Activated CD4-positive, alpha-beta T cell treated with anti-CD3 and anti-CD28 coated beads, Interleukin-2, amount 10 ng/mL, durations not matched to agents 24 days and 14 days (primary cell): ENCODE measurements at regions of chr4 and their contacts with region 1.

Region 1: GRCh38 chr4:38455092-38455862 is 208.7 kb upstream of the KLF3 start:
- DNase-seq: peak; percentile 62
- H3K4me3 Mint-ChIP-seq: peak overlapping the region; percentile 21
- H3K27ac Mint-ChIP-seq: peak overlapping the region; percentile 67
- H3K4me1 Mint-ChIP-seq: peaks cover 32% of the 10 kb centered on the region
- H3K27me3 Mint-ChIP-seq: peaks cover 16% of the 10 kb centered on the region

Region 2: DNA sequence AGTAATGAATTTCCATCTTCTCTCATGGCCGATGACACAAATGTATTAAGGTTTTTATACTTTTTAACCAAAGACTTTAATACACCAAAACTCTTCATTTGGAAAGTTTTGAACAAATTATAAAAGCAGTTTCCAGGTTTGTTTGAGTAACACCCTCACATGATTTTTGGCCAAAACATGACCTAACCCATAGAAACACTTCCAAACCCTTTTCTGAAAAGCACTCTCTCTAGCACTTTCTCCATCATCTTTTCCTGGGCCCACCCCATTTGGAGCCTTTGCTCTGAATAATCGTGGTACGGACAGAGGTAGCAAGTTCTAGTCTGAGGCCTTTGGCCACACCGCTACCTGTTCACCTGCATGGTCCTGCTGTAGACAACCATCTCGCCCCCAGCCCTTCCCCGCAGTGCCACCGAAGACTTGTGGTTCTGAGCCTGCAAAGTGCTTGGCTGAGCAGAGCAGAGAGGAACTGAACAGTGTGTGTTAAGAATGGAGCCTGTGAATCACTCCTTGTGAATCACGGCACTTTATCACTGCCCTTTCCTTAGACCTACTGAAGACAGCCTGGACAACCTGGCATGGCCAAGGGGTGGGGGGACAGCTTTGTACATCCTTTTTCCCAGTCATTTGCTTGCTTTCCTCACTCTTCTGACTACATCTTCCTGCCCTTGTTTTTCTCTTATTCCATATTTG is 313.3 kb before region 1 on chr4:
- intact Hi-C with region 1: no loop called
- DNase-seq: no peak
- H3K4me3 Mint-ChIP-seq: no peak overlapping the region
- H3K27ac Mint-ChIP-seq: no peak overlapping the region
- H3K4me1 Mint-ChIP-seq: peaks cover 7% of the 10 kb centered on the region
- H3K27me3 Mint-ChIP-seq: no peaks in the 10 kb centered on the region

Region 3: DNA sequence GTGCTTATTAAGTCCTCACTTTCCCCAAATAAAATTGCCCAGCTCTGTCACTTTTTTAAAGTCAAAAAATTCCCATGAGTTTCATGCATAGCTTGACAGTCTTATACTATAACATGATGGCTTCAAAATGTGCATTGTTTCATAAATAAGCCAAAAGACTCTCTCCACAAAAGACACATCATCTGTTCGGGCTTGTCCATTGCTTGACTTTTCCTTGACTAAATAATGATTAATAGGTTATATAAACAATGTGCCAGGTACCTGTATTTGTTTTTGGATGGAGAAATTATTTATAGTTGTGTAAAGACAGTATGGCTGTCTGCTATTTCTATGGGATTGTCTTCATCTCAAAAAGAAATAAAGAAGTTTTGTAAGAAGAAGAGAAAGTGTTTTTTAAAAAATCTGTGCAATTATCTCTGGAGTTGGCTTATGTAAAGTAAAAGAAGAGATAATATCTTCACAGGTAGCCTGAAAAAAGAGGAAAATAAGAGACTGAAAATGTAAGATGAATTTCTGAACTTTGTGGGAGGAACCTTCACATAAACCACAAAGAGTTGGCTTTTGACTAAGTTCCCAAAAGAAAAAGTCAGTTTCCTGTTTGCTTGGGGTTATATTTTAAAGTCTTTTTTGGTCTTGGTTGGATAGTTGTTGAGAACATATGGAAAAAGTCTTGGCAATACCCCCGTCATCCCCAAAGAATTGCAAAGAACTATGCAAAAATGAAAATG is 120.3 kb before region 1 on chr4:
- intact Hi-C with region 1: loop called (anchors 5 kb)
- DNase-seq: no peak
- H3K4me3 Mint-ChIP-seq: peak overlapping the region; percentile 6
- H3K27ac Mint-ChIP-seq: peak overlapping the region; percentile 3
- H3K4me1 Mint-ChIP-seq: peaks cover 17% of the 10 kb centered on the region
- H3K27me3 Mint-ChIP-seq: peaks cover 44% of the 10 kb centered on the region

Region 4: GRCh38 chr4:38523524-38524448 is 68.5 kb after region 1 on chr4:
- intact Hi-C with region 1: loop called (anchors 1 kb)
- DNase-seq: peak; percentile 81
- H3K4me3 Mint-ChIP-seq: no peak overlapping the region
- H3K27ac Mint-ChIP-seq: peak overlapping the region; percentile 18
- H3K4me1 Mint-ChIP-seq: peaks cover 13% of the 10 kb centered on the region
- H3K27me3 Mint-ChIP-seq: peaks cover 27% of the 10 kb centered on the region

Region 5: DNA sequence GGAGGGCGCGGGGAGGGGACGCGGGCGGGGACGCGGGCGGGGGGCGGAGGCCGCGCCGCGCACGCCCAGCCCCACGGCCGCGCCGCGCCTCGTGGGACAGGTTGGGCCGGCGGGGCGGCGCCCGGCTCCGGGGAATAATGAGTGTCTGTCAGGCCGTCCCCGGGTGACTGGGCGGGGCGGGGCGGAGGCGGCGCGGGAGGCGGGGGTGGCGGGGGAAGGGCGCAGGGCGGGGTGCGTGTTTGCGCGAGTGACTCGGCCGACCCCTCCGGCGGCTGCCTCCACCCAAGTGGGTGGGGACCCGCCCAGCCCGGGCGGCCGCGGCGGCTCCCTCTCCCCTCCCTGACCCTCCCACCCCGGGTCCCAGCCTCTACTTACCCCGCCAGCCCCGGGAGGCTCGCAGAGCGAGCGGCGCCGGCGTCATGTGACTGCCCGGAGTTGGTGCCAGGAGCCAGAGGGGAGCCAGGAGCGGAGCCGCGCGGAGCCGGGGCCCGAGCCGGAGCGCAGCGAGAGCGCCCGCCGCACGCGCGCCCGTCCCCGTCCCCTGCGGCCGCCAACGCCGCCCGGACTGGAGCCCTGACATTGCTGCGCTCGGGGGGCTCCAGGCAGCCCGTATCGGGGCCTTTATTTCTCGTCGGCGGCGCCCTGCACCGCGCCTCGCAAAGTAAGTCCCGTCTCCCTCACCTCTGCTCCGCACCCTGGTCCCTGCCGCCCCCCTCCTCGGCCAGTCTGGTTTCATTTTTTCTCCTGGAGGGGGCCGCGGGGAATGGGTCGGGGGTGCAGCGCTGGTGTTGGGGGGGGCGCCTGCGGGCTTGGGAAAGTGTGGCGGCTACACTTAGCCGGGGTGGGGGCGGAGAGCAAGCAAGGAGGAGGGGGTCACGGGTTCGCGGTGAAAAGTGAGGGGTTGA is 208.8 kb after region 1 on chr4 and contains the start of gene KLF3:
- intact Hi-C with region 1: loop called (anchors 5 kb)
- DNase-seq: peak; percentile 96
- H3K4me3 Mint-ChIP-seq: peak within 1 kb of the TSS; percentile 76
- H3K27ac Mint-ChIP-seq: peak within 1 kb of the TSS; percentile 65
- H3K4me1 Mint-ChIP-seq: peaks cover 40% of the 10 kb centered on the region
- H3K27me3 Mint-ChIP-seq: peaks cover 47% of the 10 kb centered on the region
- total RNA-seq, gene KLF3: 0.83 and 1.0 TPM in 2 replicates

Region 6: DNA sequence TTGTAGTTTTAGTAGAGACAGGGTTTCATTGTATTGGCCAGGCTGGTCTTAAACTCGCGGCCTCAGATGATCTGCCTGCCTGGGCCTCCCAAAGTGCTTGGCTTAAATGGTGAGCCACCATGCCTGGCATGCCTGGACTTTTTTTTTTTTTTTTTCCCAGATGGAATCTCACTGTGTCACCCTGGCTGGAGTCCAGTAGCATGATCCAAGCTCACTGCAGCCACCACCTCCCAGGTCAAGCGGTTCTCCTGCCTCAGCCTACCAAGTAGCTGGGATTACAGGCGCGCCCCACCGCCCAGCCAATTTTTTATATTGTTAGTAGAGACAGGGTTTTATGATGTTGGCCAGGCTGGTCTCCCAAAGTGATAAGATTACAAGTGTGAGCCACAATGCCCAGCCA is 1251.1 kb after region 1 on chr4:
- intact Hi-C with region 1: no loop called
- DNase-seq: no peak
- H3K4me3 Mint-ChIP-seq: no peak overlapping the region
- H3K27ac Mint-ChIP-seq: no peak overlapping the region
- H3K4me1 Mint-ChIP-seq: peaks cover 14% of the 10 kb centered on the region
- H3K27me3 Mint-ChIP-seq: no peaks in the 10 kb centered on the region